ENCODE measurements at regions of chr6 and their contacts with region 1.

Region 1: DNA sequence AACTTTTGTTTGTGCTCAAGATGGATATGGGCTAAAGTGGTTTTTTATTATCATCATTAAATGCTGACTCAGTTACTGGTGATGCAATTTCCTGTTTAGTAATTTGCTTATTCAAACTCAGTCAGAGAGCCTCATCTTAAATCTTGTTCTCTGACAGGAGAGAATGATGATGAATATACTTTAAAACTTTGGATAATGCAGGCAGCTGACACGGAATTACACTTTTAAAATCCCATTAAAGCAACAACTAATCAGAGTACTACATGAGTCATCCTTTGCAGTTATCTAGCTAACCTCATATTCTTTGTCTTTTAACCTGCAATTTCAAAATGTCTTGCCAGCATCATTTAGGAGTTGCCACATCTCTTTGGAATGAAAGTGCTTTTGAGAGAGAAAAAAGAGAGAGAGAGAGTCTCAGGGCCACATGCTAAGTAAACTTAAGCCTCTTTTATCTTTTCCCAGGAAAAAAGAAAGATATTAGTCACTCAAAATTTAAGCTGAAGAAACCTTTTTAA is 9.2 kb upstream of the C6orf141 start:
- DNase-seq: peak; percentile 98
- H3K4me3 ChIP-seq: no peak overlapping the region
- H3K27ac ChIP-seq: peak overlapping the region; percentile 71
- H3K4me1 ChIP-seq: peaks cover 62% of the 10 kb centered on the region
- H3K27me3 ChIP-seq: no peaks in the 10 kb centered on the region
- CTCF ChIP-seq: no peak

Region 2: GRCh38 chr6:48423640-48424365 is 1117.5 kb before region 1 on chr6:
- CTCF ChIA-PET with region 1: no interaction called
- POLR2A ChIA-PET with region 1: no interaction called
- intact Hi-C with region 1: no loop called
- DNase-seq: no peak
- H3K4me3 ChIP-seq: no peak overlapping the region
- H3K27ac ChIP-seq: no peak overlapping the region
- H3K4me1 ChIP-seq: peaks cover under 1% of the 10 kb centered on the region
- H3K27me3 ChIP-seq: no peaks in the 10 kb centered on the region
- CTCF ChIP-seq: no peak

Region 3: DNA sequence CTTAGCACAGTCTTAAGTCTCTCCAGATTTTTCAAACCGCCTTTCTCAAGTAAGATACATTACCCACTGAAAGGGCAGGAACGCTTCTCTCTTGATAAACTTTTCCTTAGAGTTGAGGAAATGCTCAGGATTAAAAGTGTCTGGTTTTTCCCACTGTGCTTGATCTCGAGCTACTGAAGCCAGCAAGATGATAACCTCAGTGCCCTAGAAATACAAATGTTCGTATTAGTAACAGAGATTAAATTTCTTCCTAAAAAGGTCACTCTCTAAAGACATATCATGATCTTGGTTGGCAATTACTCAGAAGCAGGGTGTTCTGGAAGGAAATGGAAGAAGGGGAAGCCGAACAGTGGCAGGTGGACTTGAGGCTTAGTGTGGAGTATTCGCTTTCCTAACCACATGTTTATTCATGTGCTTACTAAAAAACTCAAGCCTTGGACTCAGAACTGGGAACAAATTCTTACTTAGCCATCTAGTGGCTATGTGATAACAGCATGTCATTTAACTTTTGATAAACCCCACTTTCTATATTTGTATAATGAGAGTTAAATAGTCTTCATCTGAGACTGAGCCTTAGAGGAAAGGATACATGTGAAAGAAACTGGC is 29.3 kb after region 1 on chr6:
- CTCF ChIA-PET with region 1: no interaction called
- POLR2A ChIA-PET with region 1: no interaction called
- intact Hi-C with region 1: loop called (anchors 2 kb)
- DNase-seq: peak; percentile 67
- H3K4me3 ChIP-seq: no peak overlapping the region
- H3K27ac ChIP-seq: no peak overlapping the region
- H3K4me1 ChIP-seq: peaks cover 11% of the 10 kb centered on the region
- H3K27me3 ChIP-seq: no peaks in the 10 kb centered on the region
- CTCF ChIP-seq: peak; percentile 51; the same call in 1 of the 2 replicates